PC-9 (cell line): ENCODE measurements at regions of chr6 and their contacts with region 1.

Region 1: DNA sequence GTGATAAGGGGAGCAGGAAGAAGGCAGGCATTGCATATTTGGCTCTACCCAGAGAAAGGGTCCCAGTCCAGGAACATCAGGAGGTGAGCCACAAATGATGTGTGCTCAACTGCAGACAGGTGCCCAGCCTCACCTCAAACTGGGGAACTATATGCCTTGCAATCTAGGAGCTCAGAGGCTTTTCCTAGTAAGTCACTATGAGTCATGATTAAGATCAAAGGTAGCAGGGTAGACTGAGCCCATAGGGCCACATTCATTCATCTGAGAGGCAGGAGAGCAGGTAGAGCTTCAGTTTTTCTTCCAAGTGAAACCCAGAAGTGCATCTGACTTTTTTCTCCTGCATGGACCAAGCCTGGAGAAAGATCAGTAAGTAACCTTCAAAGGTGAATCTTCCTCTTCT is 31.3 kb downstream of the MARCKS start:
- DNase-seq: peak in 1 of 2 experiments; percentile 44
- H3K4me3 ChIP-seq: no peak overlapping the region
- H3K27ac ChIP-seq: no peak overlapping the region
- H3K4me1 ChIP-seq: peaks cover 10% of the 10 kb centered on the region
- H3K27me3 ChIP-seq: no peaks in the 10 kb centered on the region
- CTCF ChIP-seq: no peak

Region 2: GRCh38 chr6:113205553-113205952 is 682.9 kb before region 1 on chr6:
- CTCF ChIA-PET with region 1: no interaction called
- POLR2A ChIA-PET with region 1: interaction called, 16 read pairs
- intact Hi-C with region 1: no loop called
- DNase-seq: no peak
- H3K4me3 ChIP-seq: no peak overlapping the region
- H3K27ac ChIP-seq: no peak overlapping the region
- H3K4me1 ChIP-seq: no peaks in the 10 kb centered on the region
- H3K27me3 ChIP-seq: no peaks in the 10 kb centered on the region
- CTCF ChIP-seq: no peak